CD14-positive monocyte (primary cell): ENCODE measurements at regions of chr7 and their contacts with region 1.

Region 1: GRCh38 chr7:30062591-30062990 is 34.4 kb downstream of the PLEKHA8 start:
- DNase-seq: peak; percentile 7 to 23 (median 12)
- H3K4me3 ChIP-seq: no peak overlapping the region
- H3K4me3 Mint-ChIP-seq: no peak overlapping the region
- H3K27ac ChIP-seq: no peak overlapping the region
- H3K27ac Mint-ChIP-seq: no peak overlapping the region
- H3K4me1 ChIP-seq: no peaks in the 10 kb centered on the region
- H3K4me1 Mint-ChIP-seq: peaks cover 4% of the 10 kb centered on the region
- H3K27me3 ChIP-seq: no peaks in the 10 kb centered on the region
- H3K27me3 Mint-ChIP-seq: peaks cover 0 to 3% (median 0%) of the 10 kb centered on the region in 3 donors
- CTCF ChIP-seq: peak; percentile 57

Region 2: DNA sequence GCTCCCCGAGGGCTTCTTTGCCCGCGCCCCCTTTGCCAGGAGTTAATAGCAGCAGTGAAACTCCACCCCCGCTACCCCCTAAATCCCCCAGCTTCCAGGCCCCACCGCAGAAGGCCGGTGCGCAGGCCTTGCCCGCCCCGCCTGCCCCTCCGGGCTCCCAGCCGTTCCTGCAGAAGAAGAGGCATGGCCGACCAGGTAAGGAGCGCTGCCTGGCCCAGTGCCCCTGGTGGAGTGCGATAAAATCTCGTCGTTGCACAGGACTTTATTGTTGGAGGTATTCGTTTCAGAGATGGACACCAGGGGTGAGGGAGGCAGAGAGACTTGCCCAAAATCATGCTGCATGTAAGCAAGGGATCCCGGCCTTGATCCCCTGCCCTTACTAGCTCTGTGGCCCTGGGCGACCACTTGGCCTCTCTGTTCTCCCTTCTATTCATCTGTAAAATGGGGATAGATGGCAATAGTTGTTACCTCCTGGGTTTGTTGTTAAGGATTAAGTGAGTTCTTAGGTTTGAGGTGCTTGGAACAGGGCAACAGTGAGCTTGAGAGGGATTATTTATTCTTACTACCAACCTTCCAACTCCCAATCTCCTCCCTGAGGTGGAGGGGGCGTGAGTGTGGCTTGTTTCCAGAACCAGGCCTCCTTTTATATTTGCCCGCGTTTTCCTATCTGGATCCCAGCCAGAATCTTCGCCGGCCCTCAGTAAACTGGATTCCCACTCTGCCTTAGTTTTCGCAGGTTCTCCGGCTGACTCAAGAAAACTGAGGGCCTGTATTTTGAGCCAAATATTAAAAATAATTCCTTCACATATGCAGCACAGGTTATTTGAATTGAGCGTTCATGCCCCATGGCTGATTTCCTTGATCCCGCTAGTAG is 178.0 kb before region 1 on chr7:
- intact Hi-C with region 1: loop called in 1 of 2 experiments (anchors 10 kb)
- DNase-seq: no peak
- H3K4me3 ChIP-seq: no peak overlapping the region
- H3K4me3 Mint-ChIP-seq: peak overlapping the region in 1 of 2 donors; percentile 64
- H3K27ac ChIP-seq: no peak overlapping the region
- H3K27ac Mint-ChIP-seq: no peak overlapping the region
- H3K4me1 ChIP-seq: peaks cover 0 to 2% of the 10 kb centered on the region in 2 donors
- H3K4me1 Mint-ChIP-seq: peaks cover 13% of the 10 kb centered on the region
- H3K27me3 ChIP-seq: peaks cover 4 to 20% of the 10 kb centered on the region in 2 donors
- H3K27me3 Mint-ChIP-seq: peaks cover 23 to 28% (median 24%) of the 10 kb centered on the region in 3 donors
- CTCF ChIP-seq: no peak

Region 3: DNA sequence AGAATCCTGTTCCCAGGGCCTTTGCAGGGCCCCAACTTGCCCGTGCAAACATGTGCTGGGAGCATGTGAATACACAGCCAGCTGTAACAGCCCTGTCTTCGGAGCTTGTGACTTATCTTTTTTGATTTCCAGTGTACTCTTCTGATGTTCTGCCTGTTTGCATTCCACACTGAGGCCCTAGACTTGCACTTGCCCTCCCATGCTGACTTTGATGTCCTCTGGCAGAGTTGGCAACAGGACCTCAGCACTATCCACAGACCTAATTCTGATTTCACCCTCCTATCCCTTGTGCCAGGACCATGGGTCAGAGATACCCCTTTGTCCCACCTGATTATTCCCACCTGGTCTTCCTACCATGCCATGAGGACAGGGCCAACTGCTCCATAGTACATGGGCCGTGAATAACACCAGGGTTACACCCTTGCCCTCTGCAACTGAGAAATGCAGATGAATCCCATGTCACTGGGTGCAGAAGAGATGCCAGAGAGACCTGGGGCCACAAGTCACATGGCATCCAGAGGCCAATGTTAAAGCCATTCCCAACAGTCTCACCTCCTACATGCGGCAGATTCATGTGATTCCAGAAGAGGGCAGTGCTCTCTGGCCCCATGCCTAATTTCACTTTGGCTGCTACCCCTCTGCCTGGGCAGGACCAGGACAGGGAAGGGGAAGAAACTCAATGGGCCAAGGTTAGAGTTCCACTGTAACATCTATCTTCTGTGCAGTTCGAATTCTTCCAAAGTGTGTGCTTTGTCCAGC is 116.0 kb before region 1 on chr7:
- intact Hi-C with region 1: loop called in 1 of 2 experiments (anchors 10 kb)
- DNase-seq: peak; percentile 37 to 54 (median 40)
- H3K4me3 ChIP-seq: no peak overlapping the region
- H3K4me3 Mint-ChIP-seq: no peak overlapping the region
- H3K27ac ChIP-seq: no peak overlapping the region
- H3K27ac Mint-ChIP-seq: peak overlapping the region in 3 of 7 donors; percentile 22 to 84 (median 57)
- H3K4me1 ChIP-seq: peaks cover 0 to 7% of the 10 kb centered on the region in 2 donors
- H3K4me1 Mint-ChIP-seq: peaks cover 6% of the 10 kb centered on the region
- H3K27me3 ChIP-seq: no peaks in the 10 kb centered on the region
- H3K27me3 Mint-ChIP-seq: peaks cover 0 to 2% (median 0%) of the 10 kb centered on the region in 3 donors
- CTCF ChIP-seq: peak; percentile 53

Region 4: DNA sequence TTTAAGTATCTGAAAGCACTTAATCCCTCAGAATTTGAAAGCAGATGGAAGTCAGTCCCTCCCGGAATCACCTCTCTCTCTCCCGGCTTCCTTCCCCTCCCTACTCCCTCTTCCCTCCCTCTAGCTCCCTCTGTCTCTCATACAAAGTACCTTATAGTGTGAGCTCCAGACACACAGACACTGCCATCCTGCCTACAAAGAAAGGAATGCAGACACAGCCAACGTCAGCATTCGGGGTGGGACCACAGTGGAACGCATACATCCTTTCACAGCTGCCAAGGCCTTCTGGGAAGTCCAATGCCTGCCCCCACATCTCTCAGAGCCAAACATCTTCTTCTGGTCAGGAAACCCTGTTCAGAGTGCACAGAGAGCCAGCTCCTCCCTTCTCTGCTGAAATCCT is 406.7 kb after region 1 on chr7:
- intact Hi-C with region 1: no loop called
- DNase-seq: no peak
- H3K4me3 ChIP-seq: no peak overlapping the region
- H3K4me3 Mint-ChIP-seq: no peak overlapping the region
- H3K27ac ChIP-seq: peak overlapping the region in 1 of 2 donors; percentile 67
- H3K27ac Mint-ChIP-seq: peak overlapping the region in 4 of 7 donors; percentile 8 to 78 (median 32)
- H3K4me1 ChIP-seq: peaks cover 55 to 63% of the 10 kb centered on the region in 2 donors
- H3K4me1 Mint-ChIP-seq: peaks cover 86% of the 10 kb centered on the region
- H3K27me3 ChIP-seq: no peaks in the 10 kb centered on the region
- H3K27me3 Mint-ChIP-seq: peaks cover 0 to under 1% (median 0%) of the 10 kb centered on the region in 3 donors
- CTCF ChIP-seq: no peak